Activated naive CD4-positive, alpha-beta T cell treated with anti-CD3 and anti-CD28 coated beads for 36 hours (primary cell): ENCODE measurements at regions of chr4 and their contacts with region 1.

Region 1: DNA sequence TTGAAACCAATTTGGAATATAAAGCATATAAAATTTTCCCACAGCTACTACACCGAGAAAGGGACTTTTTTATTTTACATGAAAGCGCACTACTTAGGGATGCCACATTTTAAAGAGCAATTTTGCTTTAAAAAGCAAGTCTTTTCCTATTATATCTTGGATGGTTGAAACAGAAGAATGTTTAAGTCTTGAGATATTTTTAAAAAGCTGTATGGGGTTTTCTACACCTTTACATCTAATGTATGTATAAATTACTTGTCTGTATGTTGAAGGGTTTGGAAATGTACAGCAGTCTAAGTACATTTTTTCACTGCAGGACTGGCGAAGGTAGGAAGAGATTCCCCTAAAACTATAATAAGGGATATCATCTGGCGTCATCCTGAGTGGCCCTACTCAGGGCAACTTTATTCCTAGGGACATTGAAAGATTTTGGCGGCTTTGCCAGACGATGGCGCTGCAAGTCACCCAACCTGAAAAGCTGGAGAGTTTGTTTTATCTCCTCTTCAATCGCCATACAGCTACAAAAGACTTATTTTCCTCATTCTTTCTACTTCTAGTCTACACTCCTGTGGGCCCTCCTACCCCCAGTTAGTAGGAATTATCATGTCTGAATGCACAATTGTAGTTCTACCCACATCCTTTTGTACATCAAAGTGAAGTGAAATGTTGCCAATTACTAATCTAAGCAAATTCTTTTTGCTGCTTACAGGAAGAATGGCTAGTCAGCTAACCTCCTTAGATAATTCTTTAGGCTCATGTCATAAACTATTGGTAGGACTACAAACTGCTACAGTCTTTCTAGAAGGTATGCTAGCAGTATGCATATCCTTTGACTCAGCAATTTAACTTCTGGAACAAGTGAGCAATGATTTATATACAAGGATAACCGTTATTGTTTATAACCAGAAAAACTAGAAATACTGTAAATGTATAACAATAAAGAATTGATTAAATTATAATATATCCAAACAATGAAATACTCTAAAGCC is 782 bp upstream of the NEK1 start:
- DNase-seq: peak; percentile 81
- H3K4me3 Mint-ChIP-seq: peak overlapping the region; percentile 87
- H3K27ac Mint-ChIP-seq: peak overlapping the region; percentile 92
- H3K4me1 Mint-ChIP-seq: peaks cover 42% of the 10 kb centered on the region
- H3K27me3 Mint-ChIP-seq: no peaks in the 10 kb centered on the region

Region 2: GRCh38 chr4:169659716-169660670 is 46.8 kb after region 1 on chr4:
- CTCF ChIA-PET with region 1: interaction called, 18 read pairs
- intact Hi-C with region 1: loop called (anchors 1 kb)
- DNase-seq: peak; percentile 87
- H3K4me3 Mint-ChIP-seq: peak overlapping the region; percentile 89
- H3K27ac Mint-ChIP-seq: peak overlapping the region; percentile 95
- H3K4me1 Mint-ChIP-seq: peaks cover 30% of the 10 kb centered on the region
- H3K27me3 Mint-ChIP-seq: no peaks in the 10 kb centered on the region

Region 3: GRCh38 chr4:169757575-169758184 is 144.5 kb after region 1 on chr4 and contains the start of gene HPF1:
- CTCF ChIA-PET with region 1: interaction called, 5 read pairs
- intact Hi-C with region 1: loop called (anchors 1 kb)
- DNase-seq: peak; percentile 97
- H3K4me3 Mint-ChIP-seq: peak within 1 kb of the TSS; percentile 83
- H3K27ac Mint-ChIP-seq: peak within 1 kb of the TSS; percentile 81
- H3K4me1 Mint-ChIP-seq: peaks cover 21% of the 10 kb centered on the region
- H3K27me3 Mint-ChIP-seq: no peaks in the 10 kb centered on the region
- total RNA-seq, gene HPF1: 35.7 to 36.6 TPM

Region 4: GRCh38 chr4:169810325-169811323 is 197.5 kb after region 1 on chr4:
- CTCF ChIA-PET with region 1: interaction called, 8 read pairs
- intact Hi-C with region 1: loop called (anchors 1 kb)
- DNase-seq: peak; percentile 22
- H3K4me3 Mint-ChIP-seq: no peak overlapping the region
- H3K27ac Mint-ChIP-seq: no peak overlapping the region
- H3K4me1 Mint-ChIP-seq: peaks cover 2% of the 10 kb centered on the region
- H3K27me3 Mint-ChIP-seq: peaks cover 2% of the 10 kb centered on the region

Region 5: DNA sequence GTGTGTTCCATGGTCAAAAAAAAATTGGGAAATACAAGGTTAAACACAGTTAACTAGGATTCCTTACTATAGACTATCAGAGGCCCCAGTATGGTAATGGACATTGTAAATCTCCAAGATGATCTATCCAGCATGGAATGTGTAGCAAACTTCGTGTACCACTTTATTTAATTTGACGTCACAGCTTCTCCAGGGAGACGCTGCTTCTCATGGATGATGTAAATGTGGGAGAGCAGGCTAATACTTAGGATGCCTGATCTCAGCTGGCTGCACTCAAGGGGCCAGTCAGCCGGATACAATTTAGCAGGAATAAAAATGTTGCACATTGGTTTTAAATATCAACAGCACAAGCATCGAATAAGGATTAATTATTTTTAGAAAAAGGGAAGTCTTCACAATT is 256.3 kb after region 1 on chr4:
- CTCF ChIA-PET with region 1: no interaction called
- intact Hi-C with region 1: no loop called
- DNase-seq: no peak
- H3K4me3 Mint-ChIP-seq: no peak overlapping the region
- H3K27ac Mint-ChIP-seq: no peak overlapping the region
- H3K4me1 Mint-ChIP-seq: no peaks in the 10 kb centered on the region
- H3K27me3 Mint-ChIP-seq: peaks cover 10% of the 10 kb centered on the region

Region 6: GRCh38 chr4:170047771-170048354 is 434.7 kb after region 1 on chr4:
- CTCF ChIA-PET with region 1: interaction called, 3 read pairs
- intact Hi-C with region 1: loop called (anchors 1 kb)
- DNase-seq: peak; percentile 75
- H3K4me3 Mint-ChIP-seq: no peak overlapping the region
- H3K27ac Mint-ChIP-seq: no peak overlapping the region
- H3K4me1 Mint-ChIP-seq: no peaks in the 10 kb centered on the region
- H3K27me3 Mint-ChIP-seq: no peaks in the 10 kb centered on the region